Gastrocnemius medialis (tissue), 4 donors: ENCODE measurements at regions of chr12 and their contacts with region 1.

Region 1: GRCh38 chr12:54596526-54596946 is 8.1 kb upstream of the PPP1R1A start:
- DNase-seq: peak in 1 of 2 donors; percentile 48
- ATAC-seq: peak; percentile 75 to 88
- H3K4me3 ChIP-seq: no peak overlapping the region
- H3K27ac ChIP-seq: no peak overlapping the region
- H3K4me1 ChIP-seq: peaks cover 0 to 1% of the 10 kb centered on the region in 2 donors
- H3K27me3 ChIP-seq: no peaks in the 10 kb centered on the region
- CTCF ChIP-seq: peak; percentile 65 to 81 (median 70)
- POLR2A ChIP-seq: no peak

Region 2: DNA sequence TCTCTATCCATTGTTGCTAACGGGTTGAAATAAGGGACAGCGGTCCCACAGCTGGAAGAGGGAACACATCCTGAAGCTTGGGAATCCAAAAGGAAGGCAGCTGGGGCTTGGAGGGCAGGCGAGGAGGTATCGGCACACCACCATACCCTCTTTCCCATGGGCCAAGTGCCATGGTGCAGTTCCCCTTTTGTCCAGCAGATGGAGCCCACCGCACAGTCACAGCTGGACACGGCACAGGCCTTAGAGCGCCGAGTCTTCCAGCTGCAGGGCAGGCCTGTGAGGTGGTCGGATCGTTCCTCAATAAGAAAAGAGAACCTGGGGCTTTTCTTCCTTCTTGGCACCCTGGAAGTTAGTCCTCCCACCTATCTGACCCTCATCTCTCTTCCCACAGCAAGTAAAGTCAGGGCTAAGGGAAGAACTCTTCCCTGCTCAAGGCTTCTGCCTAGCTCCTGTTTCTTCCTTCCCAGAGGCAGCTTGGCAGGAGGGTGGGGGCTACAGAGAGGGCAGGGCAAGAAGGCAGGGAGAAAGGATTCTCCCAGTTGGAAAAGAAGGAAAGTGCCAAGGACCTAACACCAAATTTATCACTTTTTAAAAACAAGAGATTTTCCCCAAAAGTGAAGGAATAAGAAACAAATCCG is 16.7 kb before region 1 on chr12:
- in situ Hi-C with region 1: no loop called
- intact Hi-C with region 1: loop called (anchors 1 kb)
- DNase-seq: peak; percentile 54 to 79
- ATAC-seq: peak; percentile 84 to 95
- H3K4me3 ChIP-seq: no peak overlapping the region
- H3K27ac ChIP-seq: peak overlapping the region in 2 of 4 donors; percentile 7 to 32
- H3K4me1 ChIP-seq: peaks cover 0 to 4% of the 10 kb centered on the region in 2 donors
- H3K27me3 ChIP-seq: no peaks in the 10 kb centered on the region
- CTCF ChIP-seq: peak; percentile 93 to 100 (median 97)
- POLR2A ChIP-seq: no peak

Region 3: DNA sequence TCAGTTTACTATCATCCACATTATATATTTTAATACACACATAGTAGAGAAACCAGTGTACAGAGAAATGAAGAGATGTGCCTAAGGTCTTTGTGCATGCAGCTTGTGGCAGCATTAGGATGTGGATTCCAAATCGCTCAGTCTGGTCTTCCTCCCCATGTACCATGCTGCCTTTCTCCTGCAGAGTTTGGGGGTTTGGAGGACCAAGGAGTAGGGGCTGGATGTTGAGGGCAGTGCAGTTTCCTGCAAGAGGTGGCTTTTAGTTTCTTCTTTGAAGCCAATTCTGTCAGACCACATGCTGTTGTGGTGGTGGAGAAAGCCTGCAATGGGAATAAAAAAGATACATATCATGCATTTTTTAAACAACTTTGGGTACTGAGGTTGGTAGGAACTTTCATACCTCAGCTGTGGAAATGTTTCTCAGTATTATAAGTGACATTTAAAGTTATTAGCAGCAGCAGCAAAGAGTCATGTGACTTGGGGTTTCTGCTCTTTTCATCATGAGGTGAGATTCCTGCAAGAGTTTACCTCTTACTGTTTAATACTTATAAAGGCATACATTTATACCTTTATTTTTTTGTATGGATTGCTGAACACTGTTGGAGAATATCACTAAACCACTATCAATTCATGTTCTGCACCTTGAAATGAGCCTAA is 353.7 kb after region 1 on chr12:
- in situ Hi-C with region 1: loop called (anchors 5 to 25 kb)
- intact Hi-C with region 1: no loop called
- DNase-seq: no peak
- ATAC-seq: no peak
- H3K4me3 ChIP-seq: no peak overlapping the region
- H3K27ac ChIP-seq: peak overlapping the region in 1 of 4 donors; percentile 33
- H3K4me1 ChIP-seq: no peaks in the 10 kb centered on the region
- H3K27me3 ChIP-seq: no peaks in the 10 kb centered on the region
- CTCF ChIP-seq: no peak
- POLR2A ChIP-seq: no peak